ENCODE measurements at regions of chr14 and their contacts with region 1.

Region 1: DNA sequence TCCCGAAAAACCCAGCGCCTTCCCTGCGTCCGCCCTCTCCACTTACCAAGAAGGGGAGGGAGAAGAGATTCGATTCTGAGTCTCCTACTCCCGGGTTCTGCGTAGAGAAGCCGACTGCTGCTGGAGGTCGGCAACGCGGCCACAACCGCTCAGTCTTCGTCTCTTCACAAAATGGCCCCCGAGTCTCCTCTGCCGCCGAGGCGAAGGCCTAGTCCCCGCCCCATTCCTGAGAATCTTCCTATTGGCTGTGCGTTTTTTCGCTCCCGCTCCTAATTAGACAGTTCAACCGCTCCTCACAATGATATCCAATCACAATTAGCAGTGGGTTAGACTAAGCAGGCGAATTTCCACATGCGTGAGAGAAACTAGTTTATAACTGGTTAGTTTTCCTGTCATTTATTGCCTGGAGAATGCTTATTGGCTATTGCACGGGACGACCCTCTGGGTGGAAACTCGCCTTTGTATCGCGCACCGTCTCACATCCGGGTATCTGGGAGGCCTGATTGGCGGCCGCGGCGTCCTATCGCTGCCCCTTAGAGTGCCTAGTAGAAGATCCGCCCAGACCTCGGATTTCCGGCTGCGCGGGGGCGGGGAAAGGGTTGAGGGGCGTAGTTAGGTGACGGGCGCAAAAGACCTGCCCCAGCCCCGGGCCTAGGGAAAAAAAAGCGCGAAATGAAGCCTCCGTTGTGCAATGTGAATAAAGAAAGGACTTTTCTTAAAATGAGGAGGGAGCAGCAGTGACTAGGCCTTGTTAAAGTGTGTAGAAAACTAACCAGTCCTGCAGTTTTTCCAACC is at the start of gene HNRNPC:
- DNase-seq: peak; percentile 100
- ATAC-seq: peak; percentile 86
- H3K4me3 ChIP-seq: peak within 1 kb of the TSS; percentile 83
- H3K4me3 Mint-ChIP-seq: peak within 1 kb of the TSS; percentile 94
- H3K27ac ChIP-seq: peak within 1 kb of the TSS; percentile 95 to 97
- H3K27ac Mint-ChIP-seq: peak within 1 kb of the TSS; percentile 95
- H3K4me1 ChIP-seq: peaks cover 29% of the 10 kb centered on the region
- H3K4me1 Mint-ChIP-seq: peaks cover 45% of the 10 kb centered on the region
- H3K27me3 ChIP-seq: no peaks in the 10 kb centered on the region
- H3K27me3 Mint-ChIP-seq: no peaks in the 10 kb centered on the region
- CTCF ChIP-seq: no peak
- total RNA-seq, gene HNRNPC: 507 to 528 TPM

Region 2: GRCh38 chr14:21219561-21220111 is 49.8 kb before region 1 on chr14:
- CTCF ChIA-PET with region 1: interaction called, 6 read pairs
- POLR2A ChIA-PET with region 1: interaction called, 6 read pairs
- intact Hi-C with region 1: loop called in 1 of 2 experiments (anchors 10 kb)
- DNase-seq: no peak
- ATAC-seq: no peak
- H3K4me3 ChIP-seq: no peak overlapping the region
- H3K4me3 Mint-ChIP-seq: peak overlapping the region; percentile 17
- H3K27ac ChIP-seq: peak overlapping the region; percentile 5 to 17
- H3K27ac Mint-ChIP-seq: peak overlapping the region; percentile 89
- H3K4me1 ChIP-seq: peaks cover 55% of the 10 kb centered on the region
- H3K4me1 Mint-ChIP-seq: peaks cover 89% of the 10 kb centered on the region
- H3K27me3 ChIP-seq: no peaks in the 10 kb centered on the region
- H3K27me3 Mint-ChIP-seq: no peaks in the 10 kb centered on the region
- CTCF ChIP-seq: no peak

Region 3: DNA sequence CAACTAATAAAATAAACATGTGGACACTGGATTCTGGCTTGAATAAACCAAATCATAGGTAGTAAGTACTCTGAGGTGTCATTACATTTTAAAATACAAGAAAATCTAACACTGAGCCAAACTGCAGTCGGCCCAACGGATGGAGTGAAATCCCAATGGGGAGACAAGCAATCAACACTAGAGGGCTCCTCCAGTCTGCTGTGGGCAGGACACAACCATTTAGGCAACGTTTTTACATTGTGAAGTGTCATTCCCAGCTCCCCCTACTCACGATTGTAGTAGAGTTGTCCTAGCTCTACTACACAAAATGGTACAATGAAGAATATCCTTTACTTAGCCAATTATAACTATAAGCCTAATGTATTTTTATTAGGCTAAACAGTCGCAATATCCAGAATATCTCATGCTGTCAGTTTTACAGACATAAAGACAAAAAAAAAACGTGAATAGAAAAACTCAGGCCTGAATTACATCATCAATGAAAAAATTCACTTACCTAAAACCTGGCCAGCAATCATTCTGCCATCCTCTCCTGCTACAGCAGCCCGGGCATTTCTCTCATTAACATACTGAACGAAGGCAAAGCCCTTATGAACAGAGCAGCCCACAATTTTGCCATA is 35.9 kb before region 1 on chr14:
- CTCF ChIA-PET with region 1: interaction called, 5 read pairs
- POLR2A ChIA-PET with region 1: interaction called, 15 read pairs
- intact Hi-C with region 1: loop called (anchors 2 to 5 kb)
- DNase-seq: peak in 4 of 14 experiments; percentile 25 to 59 (median 45)
- ATAC-seq: no peak
- H3K4me3 ChIP-seq: no peak overlapping the region
- H3K4me3 Mint-ChIP-seq: peak overlapping the region; percentile 31
- H3K27ac ChIP-seq: peak overlapping the region in 1 of 2 donors; percentile 23
- H3K27ac Mint-ChIP-seq: peak overlapping the region; percentile 93
- H3K4me1 ChIP-seq: peaks cover 45% of the 10 kb centered on the region
- H3K4me1 Mint-ChIP-seq: peaks cover 87% of the 10 kb centered on the region
- H3K27me3 ChIP-seq: no peaks in the 10 kb centered on the region
- H3K27me3 Mint-ChIP-seq: no peaks in the 10 kb centered on the region
- CTCF ChIP-seq: peak; percentile 31

Region 4: DNA sequence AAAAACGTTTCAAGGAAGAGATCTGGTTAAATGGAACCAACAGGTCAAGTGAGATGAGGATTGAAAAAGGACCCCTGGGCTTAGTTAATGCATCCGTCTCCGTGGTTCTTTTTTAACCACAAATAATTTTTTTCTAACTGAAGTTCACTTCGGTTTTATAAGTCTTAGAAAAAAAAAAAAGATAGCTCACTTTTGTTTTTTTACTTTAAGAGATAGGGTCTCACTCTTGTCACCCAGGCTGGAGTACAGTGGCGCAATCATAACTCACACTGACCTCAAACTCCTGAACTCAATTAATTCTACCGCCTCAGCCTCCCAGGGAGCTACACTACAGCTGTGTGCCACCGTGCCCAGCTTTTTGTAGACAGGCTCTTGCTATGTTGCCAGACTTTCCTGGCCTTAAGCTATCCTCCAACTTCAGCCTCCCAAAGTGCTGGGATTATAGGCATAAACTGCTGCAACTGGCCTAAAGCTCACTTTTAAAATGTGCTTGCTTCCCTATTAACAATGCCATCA is 12.0 kb before region 1 on chr14:
- CTCF ChIA-PET with region 1: interaction called, 21 read pairs
- POLR2A ChIA-PET with region 1: interaction called, 50 read pairs
- intact Hi-C with region 1: no loop called
- DNase-seq: no peak
- ATAC-seq: peak; percentile 13
- H3K4me3 ChIP-seq: no peak overlapping the region
- H3K4me3 Mint-ChIP-seq: peak overlapping the region; percentile 81
- H3K27ac ChIP-seq: peak overlapping the region in 1 of 2 donors; percentile 26
- H3K27ac Mint-ChIP-seq: peak overlapping the region; percentile 80
- H3K4me1 ChIP-seq: peaks cover 61% of the 10 kb centered on the region
- H3K4me1 Mint-ChIP-seq: peaks cover 79% of the 10 kb centered on the region
- H3K27me3 ChIP-seq: no peaks in the 10 kb centered on the region
- H3K27me3 Mint-ChIP-seq: no peaks in the 10 kb centered on the region
- CTCF ChIP-seq: no peak

Region 5: GRCh38 chr14:21308479-21309237 is 39.2 kb after region 1 on chr14:
- CTCF ChIA-PET with region 1: no interaction called
- POLR2A ChIA-PET with region 1: interaction called, 4 read pairs
- intact Hi-C with region 1: loop called (anchors 2 kb)
- DNase-seq: peak; percentile 51 to 92 (median 66)
- ATAC-seq: peak; percentile 91
- H3K4me3 ChIP-seq: peak overlapping the region; percentile 55
- H3K4me3 Mint-ChIP-seq: peak overlapping the region; percentile 66
- H3K27ac ChIP-seq: peak overlapping the region; percentile 37 to 61
- H3K27ac Mint-ChIP-seq: peak overlapping the region; percentile 52
- H3K4me1 ChIP-seq: peaks cover 13% of the 10 kb centered on the region
- H3K4me1 Mint-ChIP-seq: peaks cover 24% of the 10 kb centered on the region
- H3K27me3 ChIP-seq: peaks cover 0 to 3% of the 10 kb centered on the region in 2 experiments
- H3K27me3 Mint-ChIP-seq: no peaks in the 10 kb centered on the region
- CTCF ChIP-seq: no peak

Region 6: DNA sequence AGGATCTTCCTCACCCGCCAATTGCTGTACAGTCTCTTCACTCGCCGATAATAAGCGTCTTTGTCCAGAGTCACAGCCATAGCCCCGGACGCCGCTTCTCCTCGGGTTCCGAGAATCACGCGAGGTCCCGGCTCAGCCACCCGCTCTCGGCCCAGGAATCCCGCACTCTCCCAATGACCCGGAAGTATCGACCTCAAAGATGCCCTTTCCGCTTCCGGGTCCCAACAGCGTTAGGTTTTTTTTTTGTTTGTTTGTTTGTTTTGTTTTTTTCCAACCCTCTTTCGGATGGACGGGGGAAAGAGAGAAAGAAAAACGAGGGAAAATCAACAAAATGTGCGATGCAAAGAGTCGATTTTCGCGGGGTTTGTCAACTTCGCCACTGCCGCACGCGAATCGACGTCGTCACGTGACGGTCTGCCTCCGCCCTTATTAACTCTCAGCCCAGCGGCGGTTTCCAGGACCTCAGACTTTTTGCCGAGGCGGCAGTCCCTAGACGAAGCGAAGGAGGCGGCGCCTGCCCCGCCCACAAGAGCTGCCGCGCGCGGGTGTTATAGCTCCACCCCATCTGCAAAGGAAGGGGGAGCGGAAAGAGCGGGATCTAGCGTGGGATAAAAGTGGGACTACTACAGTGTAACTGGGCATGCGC is 114.5 kb after region 1 on chr14 and contains the start of gene SUPT16H:
- CTCF ChIA-PET with region 1: no interaction called
- POLR2A ChIA-PET with region 1: interaction called, 6 read pairs
- intact Hi-C with region 1: loop called (anchors 1 to 2 kb)
- DNase-seq: peak; percentile 84 to 97 (median 91)
- ATAC-seq: peak; percentile 91
- H3K4me3 ChIP-seq: peak within 1 kb of the TSS; percentile 82
- H3K4me3 Mint-ChIP-seq: peak within 1 kb of the TSS; percentile 98
- H3K27ac ChIP-seq: peak within 1 kb of the TSS; percentile 83 to 92
- H3K27ac Mint-ChIP-seq: peak within 1 kb of the TSS; percentile 99
- H3K4me1 ChIP-seq: peaks cover 18% of the 10 kb centered on the region
- H3K4me1 Mint-ChIP-seq: peaks cover 47% of the 10 kb centered on the region
- H3K27me3 ChIP-seq: no peaks in the 10 kb centered on the region
- H3K27me3 Mint-ChIP-seq: no peaks in the 10 kb centered on the region
- CTCF ChIP-seq: no peak
- total RNA-seq, gene SUPT16H: 47.8 to 50.8 TPM

Measured in CD4-positive, alpha-beta T cell (primary cell).